ENCODE measurements at regions of chr17 and their contacts with region 1.

Region 1: GRCh38 chr17:11997147-11997846 is at the start of gene ZNF18:
- DNase-seq: peak; percentile 91
- H3K4me3 Mint-ChIP-seq: peak within 1 kb of the TSS; percentile 82
- H3K27ac Mint-ChIP-seq: peak within 1 kb of the TSS; percentile 92
- H3K4me1 Mint-ChIP-seq: peaks cover 8% of the 10 kb centered on the region
- H3K27me3 Mint-ChIP-seq: no peaks in the 10 kb centered on the region
- CTCF ChIP-seq: no peak
- total RNA-seq, gene ZNF18: 4.6 and 7.3 TPM in 2 replicates

Region 2: DNA sequence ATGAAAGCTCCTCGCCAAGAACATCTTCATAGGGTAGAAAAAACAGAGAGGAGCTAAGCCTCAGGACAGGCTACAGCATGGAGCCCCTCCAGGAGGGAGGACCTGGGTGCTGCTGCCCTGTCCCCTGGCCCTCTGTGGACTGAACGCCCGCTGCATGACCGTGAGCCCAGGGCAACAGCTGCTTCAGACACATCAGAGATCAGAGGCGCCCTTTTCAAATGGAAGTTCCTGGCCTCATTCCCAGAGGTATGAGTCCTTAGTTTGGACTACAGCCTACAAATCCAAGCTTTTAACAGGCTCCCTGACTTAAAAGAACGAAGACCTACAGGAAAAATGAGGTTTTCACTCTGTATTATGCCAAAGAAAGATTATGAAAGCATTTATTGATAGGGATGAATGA is 48.5 kb before region 1 on chr17:
- CTCF ChIA-PET with region 1: no interaction called
- POLR2A ChIA-PET with region 1: interaction called, 28 read pairs
- intact Hi-C with region 1: no loop called
- DNase-seq: peak; percentile 91
- H3K4me3 Mint-ChIP-seq: peak overlapping the region; percentile 55
- H3K27ac Mint-ChIP-seq: peak overlapping the region; percentile 28
- H3K4me1 Mint-ChIP-seq: peaks cover 31% of the 10 kb centered on the region
- H3K27me3 Mint-ChIP-seq: no peaks in the 10 kb centered on the region
- CTCF ChIP-seq: no peak

Region 3: GRCh38 chr17:12007466-12007865 is 10.2 kb after region 1 on chr17:
- CTCF ChIA-PET with region 1: interaction called, 3 read pairs
- POLR2A ChIA-PET with region 1: interaction called, 17 read pairs
- intact Hi-C with region 1: no loop called
- DNase-seq: no peak
- H3K4me3 Mint-ChIP-seq: no peak overlapping the region
- H3K27ac Mint-ChIP-seq: no peak overlapping the region
- H3K4me1 Mint-ChIP-seq: peaks cover 5% of the 10 kb centered on the region
- H3K27me3 Mint-ChIP-seq: no peaks in the 10 kb centered on the region
- CTCF ChIP-seq: no peak

Region 4: GRCh38 chr17:12041316-12041715 is 44.0 kb after region 1 on chr17:
- CTCF ChIA-PET with region 1: interaction called, 6 read pairs
- POLR2A ChIA-PET with region 1: interaction called, 60 read pairs
- intact Hi-C with region 1: no loop called
- DNase-seq: peak; percentile 74
- H3K4me3 Mint-ChIP-seq: peak overlapping the region; percentile 55
- H3K27ac Mint-ChIP-seq: peak overlapping the region; percentile 87
- H3K4me1 Mint-ChIP-seq: peaks cover 43% of the 10 kb centered on the region
- H3K27me3 Mint-ChIP-seq: no peaks in the 10 kb centered on the region
- CTCF ChIP-seq: no peak

Measured in MCF 10A (cell line).